Cardiac septum (tissue), 1 donor: ENCODE measurements at regions of chr2 and their contacts with region 1.

Region 1: DNA sequence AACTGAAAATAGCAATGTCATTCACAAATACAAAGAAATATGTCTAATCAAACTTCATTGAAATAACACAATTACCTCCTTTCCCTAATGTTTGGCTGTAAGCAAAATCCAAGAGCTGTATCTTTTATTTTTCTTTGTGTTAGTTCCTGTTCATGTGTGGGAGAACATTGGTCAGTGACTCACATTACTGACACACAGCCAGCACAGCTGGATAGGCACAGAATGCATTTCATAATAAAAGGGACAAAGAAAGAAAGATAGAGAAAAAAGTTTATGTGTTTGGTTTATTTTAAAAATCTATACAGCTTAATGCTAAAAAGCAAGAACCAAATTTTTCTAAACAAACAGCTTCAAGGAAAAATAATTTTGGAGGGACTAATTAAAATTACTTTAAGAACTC is 185.6 kb upstream of the COL3A1 start:
- DNase-seq: no peak

Region 2: DNA sequence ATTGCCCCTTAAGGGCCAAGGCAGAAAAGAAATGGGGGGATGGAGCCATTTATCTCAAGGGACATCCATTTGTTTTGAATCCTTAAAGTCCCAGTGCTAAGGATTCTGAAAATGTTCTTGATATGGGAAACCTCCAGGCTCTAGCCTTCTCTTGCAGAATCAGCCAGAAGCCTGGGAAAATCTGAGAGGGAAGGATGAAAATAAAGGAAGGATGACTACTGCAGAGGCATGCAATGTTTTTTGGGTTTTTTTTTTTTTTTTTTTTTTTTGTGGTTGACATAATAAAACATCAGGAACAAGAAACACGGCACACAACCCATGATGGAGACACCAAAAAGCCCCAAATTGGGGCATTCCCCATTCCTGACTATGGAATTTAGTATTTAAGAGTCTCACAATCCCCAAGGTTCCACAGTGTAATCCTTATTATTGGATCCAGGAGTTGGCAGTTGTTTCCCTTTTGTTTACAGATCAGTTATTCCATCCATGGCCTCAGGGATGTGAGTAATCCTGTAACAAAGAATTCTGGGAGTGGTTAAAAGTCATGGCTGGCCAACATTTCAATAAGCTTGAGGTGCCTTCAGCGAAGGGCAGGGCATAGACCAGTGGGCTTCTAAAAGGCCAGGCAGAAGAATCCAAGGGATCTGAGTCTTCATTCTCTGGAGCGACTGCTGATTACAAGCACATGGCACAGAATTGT is 159.5 kb before region 1 on chr2:
- intact Hi-C with region 1: no loop called
- DNase-seq: no peak

Region 3: DNA sequence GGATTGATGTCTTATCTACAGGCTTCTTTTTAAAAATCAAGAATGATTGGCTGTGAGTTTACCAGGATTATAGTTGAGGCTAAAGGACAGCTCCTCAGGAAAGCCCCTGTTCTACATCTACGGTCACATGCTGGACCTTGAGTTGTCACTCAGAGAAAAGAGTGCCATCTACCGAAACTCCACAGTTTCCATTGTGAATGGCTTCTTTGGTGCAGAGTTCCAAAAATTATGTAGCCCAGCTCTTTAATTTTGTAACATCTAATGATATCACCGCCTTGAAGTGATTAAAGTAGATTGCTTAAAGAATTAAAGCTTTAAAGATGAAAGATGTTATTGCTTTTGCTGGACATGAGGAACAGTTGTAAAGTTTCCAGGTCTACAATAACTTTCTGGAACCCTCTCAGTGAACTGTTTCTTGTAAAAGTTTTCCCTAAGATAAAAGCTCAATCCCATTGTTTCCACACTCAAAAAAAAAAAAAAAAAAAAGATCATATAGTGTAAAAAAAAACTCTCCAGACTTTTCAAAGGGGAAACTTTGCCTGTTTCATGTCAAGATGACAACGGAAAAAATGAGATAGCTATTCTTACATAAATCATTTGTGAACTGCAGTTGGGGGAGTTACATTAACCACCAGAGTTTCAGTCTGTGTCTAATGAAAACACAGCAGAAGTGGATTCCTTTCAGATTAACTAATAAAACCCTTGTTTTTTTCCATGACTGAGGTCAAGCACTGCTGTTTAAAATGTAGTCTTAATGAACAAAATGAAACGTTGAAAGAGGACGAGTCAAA is 189.9 kb after region 1 on chr2:
- intact Hi-C with region 1: loop called (anchors 2 kb)
- DNase-seq: no peak